WTC11 (cell line): ENCODE measurements at regions of chr12 and their contacts with region 1.

Region 1: DNA sequence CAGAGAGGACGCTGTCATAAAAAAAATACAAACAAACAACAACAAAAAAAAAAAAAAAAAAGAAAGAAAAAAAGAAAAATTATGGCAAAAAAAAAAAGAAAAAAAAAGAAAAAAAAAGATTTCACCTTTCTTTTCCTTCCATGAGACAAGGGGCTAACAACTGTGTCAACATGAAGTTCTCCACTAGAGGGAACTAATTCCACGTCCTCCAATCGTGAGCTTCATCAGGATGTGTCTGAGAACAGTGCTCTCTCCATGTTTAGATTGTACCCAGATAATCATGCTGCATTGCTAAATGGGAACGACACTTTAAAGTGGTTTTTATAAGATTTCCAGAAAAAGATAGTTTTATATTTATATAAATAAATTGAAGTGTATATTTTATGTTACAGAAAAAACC is 96.2 kb upstream of the PTPRB start:
- DNase-seq: no peak
- ATAC-seq: peak; percentile 87
- H3K4me3 Mint-ChIP-seq: no peak overlapping the region
- H3K27ac Mint-ChIP-seq: no peak overlapping the region
- H3K4me1 Mint-ChIP-seq: no peaks in the 10 kb centered on the region
- H3K27me3 Mint-ChIP-seq: no peaks in the 10 kb centered on the region; the same call in 1 of the 2 replicates
- CTCF ChIP-seq: peak; percentile 66

Region 2: GRCh38 chr12:70849265-70849960 is 116.0 kb after region 1 on chr12:
- CTCF ChIA-PET with region 1: interaction called, 25 read pairs
- POLR2A ChIA-PET with region 1: no interaction called
- DNase-seq: no peak
- ATAC-seq: peak; percentile 24; the same call in 1 of the 2 replicates
- H3K4me3 Mint-ChIP-seq: no peak overlapping the region
- H3K27ac Mint-ChIP-seq: no peak overlapping the region
- H3K4me1 Mint-ChIP-seq: peaks cover under 1% of the 10 kb centered on the region
- H3K27me3 Mint-ChIP-seq: peaks cover 6% of the 10 kb centered on the region
- CTCF ChIP-seq: no peak

Region 3: DNA sequence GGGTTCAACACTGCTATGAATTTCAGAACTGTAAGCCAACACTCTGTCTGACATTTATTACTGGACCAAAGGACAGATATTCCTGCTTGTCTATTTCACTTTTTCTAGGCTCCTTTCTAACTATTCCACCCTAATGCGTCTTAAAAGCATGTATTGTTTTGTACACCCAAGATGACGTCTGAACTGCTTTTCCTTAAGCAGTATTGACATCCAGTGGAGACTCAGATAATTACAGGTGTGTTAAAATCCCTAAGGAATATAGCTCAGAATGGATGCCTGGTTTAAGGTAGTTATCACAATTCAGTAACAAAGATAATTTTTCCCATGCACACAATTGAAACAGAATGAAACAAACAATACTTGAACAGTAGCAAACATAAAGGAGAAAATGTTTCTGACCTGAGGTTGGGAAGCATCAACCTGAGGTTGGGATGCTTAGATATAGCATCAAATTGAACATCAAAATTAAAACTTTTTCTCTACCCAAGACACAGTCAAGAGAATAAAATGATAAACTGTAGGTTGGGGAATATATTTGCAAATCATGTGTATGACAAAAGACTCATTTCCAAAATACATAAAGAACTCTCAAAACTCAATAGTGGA is 280.9 kb after region 1 on chr12:
- CTCF ChIA-PET with region 1: interaction called, 21 read pairs
- POLR2A ChIA-PET with region 1: no interaction called
- DNase-seq: no peak
- ATAC-seq: peak; percentile 79
- H3K4me3 Mint-ChIP-seq: no peak overlapping the region
- H3K27ac Mint-ChIP-seq: no peak overlapping the region
- H3K4me1 Mint-ChIP-seq: no peaks in the 10 kb centered on the region
- H3K27me3 Mint-ChIP-seq: no peaks in the 10 kb centered on the region
- CTCF ChIP-seq: no peak